HEK293 (cell line): ENCODE measurements at regions of chr16 and their contacts with region 1.

Region 1: GRCh38 chr16:106623-107324 is 28.7 kb downstream of the MPG start:
- H3K4me3 ChIP-seq: no peak overlapping the region
- H3K27ac ChIP-seq: no peak overlapping the region
- H3K4me1 ChIP-seq: no peaks in the 10 kb centered on the region
- CTCF ChIP-seq: peak; percentile 75

Region 2: DNA sequence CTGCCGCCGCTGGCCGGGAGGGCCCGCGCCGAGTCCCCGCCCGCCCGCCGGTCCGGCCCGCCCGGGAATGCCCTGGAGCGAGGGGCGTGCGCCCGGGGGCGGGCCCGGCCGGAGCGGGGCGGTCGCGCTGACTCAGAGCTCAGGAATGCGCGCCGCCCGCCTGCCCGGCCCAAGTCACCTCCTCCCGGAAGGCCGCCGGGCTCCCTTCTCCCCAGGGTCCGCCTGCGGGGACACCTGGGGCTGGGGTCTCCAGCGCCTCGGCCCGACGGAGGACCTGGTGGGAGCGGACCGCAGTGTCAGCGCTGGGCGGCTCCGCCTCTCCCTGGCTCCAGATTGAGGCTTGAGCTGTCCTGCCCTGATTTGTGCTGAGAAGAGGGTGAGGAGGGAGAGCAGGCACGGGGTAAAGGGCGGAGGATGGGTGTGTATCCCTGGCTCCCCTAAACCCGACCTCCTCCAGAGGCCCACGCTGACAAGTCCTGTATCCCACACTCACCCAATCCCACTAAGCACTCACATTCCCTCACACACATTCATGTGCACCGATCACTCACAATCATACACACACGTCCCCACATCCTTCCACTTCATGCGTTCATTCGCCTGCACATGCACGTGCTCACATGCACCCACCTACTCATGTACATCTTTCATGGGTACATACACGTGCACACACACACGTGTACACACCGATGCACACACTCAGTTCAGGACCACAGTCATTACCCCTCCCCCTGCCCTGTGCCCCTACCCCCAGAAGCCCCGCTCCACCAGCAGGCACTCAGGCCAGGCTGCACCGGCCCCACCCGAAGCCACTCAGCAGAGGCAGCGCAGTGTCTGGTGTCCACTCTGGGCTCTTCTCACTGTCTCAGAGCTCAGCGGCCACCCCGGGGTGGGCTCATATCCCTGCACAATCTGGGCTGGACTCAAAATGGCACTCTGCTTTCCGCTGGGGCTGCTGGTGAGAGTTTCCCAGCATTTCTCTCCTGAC is 33.9 kb before region 1 on chr16 and contains the start of gene RHBDF1:
- CTCF ChIA-PET with region 1: interaction called, 18 read pairs
- POLR2A ChIA-PET with region 1: interaction called, 3 read pairs
- H3K4me3 ChIP-seq: peak within 1 kb of the TSS; percentile 51
- H3K27ac ChIP-seq: peak within 1 kb of the TSS; percentile 47
- H3K4me1 ChIP-seq: peaks cover 18% of the 10 kb centered on the region
- CTCF ChIP-seq: no peak

Region 3: DNA sequence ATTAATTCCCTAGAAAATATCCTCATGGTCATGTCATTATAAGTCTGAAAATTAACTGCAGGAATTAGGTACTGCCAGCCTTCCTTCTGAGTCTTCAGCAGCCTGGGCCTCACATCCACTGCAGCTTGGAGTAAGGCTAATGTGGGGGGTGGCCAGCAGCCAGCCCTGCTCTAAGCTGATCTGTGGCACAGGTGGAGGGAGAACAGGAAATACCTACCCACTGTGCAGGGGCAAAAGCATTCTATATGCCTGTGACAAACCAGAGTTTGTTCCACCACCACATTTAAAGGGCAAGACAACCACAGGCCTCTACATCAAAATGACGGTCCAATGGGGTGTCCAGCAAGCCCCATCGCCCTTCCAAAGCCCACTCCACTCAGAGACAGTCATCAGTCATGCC is 22.3 kb after region 1 on chr16:
- CTCF ChIA-PET with region 1: interaction called, 19 read pairs
- POLR2A ChIA-PET with region 1: no interaction called
- H3K4me3 ChIP-seq: no peak overlapping the region
- H3K27ac ChIP-seq: no peak overlapping the region
- H3K4me1 ChIP-seq: no peaks in the 10 kb centered on the region
- CTCF ChIP-seq: no peak

Region 4: DNA sequence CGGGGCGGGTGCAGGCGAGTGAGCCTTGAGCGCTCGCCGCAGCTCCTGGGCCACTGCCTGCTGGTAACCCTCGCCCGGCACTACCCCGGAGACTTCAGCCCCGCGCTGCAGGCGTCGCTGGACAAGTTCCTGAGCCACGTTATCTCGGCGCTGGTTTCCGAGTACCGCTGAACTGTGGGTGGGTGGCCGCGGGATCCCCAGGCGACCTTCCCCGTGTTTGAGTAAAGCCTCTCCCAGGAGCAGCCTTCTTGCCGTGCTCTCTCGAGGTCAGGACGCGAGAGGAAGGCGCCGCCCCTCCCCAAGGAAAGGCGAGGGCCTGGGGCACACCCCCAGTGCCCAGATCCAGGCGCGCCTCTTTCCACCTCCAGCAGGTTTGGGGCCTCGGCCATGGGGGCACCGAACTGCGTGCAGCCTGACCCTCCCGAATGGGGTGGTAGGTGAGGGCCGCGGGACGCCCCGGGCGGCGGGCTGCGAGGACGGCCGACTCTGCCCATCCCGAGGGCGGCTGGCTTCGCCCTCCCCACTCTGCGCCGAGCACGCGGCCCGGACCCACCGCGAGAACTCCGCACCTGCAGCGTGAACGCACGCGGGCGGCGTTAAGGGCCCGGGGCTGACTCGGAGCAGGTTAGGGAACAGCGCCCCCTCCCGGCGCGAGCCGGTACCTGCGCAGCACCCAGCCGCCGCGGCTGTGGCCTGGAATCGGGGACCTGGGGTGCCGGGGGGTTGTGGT is 74.3 kb after region 1 on chr16:
- CTCF ChIA-PET with region 1: interaction called, 25 read pairs
- POLR2A ChIA-PET with region 1: no interaction called
- H3K4me3 ChIP-seq: no peak overlapping the region; the same call in 1 of the 2 replicates
- H3K27ac ChIP-seq: peak overlapping the region; percentile 25; the same call in 1 of the 2 replicates
- H3K4me1 ChIP-seq: peaks cover 3% of the 10 kb centered on the region; the same call in 1 of the 2 replicates
- CTCF ChIP-seq: peak; percentile 96

Region 5: GRCh38 chr16:361872-362701 is 255.3 kb after region 1 on chr16:
- CTCF ChIA-PET with region 1: interaction called, 70 read pairs
- POLR2A ChIA-PET with region 1: no interaction called
- H3K4me3 ChIP-seq: no peak overlapping the region
- H3K27ac ChIP-seq: no peak overlapping the region
- H3K4me1 ChIP-seq: no peaks in the 10 kb centered on the region; the same call in 1 of the 2 replicates
- CTCF ChIP-seq: peak; percentile 95